ENCODE measurements at regions of chr6 and their contacts with region 1.

Region 1: GRCh38 chr6:152124429-152125074 is 317.1 kb downstream of the ESR1 start:
- DNase-seq: no peak
- H3K4me3 ChIP-seq: no peak overlapping the region
- H3K27ac ChIP-seq: peak overlapping the region in 1 of 8 donors; percentile 15
- H3K4me1 ChIP-seq: peaks cover 0 to 2% (median 0%) of the 10 kb centered on the region in 6 donors
- H3K27me3 ChIP-seq: no peaks in the 10 kb centered on the region
- CTCF ChIP-seq: peak; percentile 25 to 76 (median 68)
- POLR2A ChIP-seq: no peak

Region 2: DNA sequence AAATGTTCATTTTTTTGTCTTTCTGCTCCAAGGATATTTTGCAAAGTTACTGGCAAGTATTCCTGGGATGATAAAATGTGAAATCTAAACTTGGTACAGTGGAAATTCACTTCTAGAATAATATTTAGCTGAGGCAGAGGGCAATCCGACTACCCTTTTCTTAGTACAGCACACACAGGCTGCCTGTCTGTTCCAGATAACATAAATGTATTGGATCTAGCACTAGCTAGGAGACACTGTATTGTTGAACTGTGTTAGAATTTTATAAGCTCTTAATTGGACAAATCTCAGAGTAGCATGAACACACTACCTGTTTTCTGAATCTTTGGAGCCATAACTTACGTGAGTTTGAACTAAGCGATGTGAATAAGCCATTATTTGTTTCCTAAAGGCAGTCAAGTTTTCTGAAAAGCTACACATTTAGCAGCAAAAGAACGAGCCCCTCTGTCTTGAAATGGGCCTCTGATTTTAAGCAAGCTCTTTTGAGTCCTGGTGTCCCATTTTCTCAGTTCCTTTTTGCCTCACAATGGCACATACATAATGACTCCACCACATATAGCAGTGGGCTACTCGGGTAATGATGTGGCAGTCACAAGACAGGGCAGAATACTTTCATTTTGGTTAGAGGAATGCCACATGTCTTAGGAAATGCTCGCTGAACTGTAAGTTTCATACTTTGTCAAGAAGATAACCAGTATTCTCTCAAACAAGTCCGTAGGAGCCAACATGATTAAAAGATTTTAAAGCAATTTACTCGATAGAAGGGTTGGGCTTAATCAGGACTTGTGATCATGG is 433.6 kb before region 1 on chr6:
- intact Hi-C with region 1: loop called (anchors 10 kb)
- DNase-seq: no peak
- H3K4me3 ChIP-seq: peak overlapping the region in 6 of 8 donors; percentile 10 to 55 (median 17)
- H3K27ac ChIP-seq: peak overlapping the region; percentile 55 to 88 (median 79)
- H3K4me1 ChIP-seq: peaks cover 0 to 32% (median 9%) of the 10 kb centered on the region in 6 donors
- H3K27me3 ChIP-seq: no peaks in the 10 kb centered on the region
- CTCF ChIP-seq: no peak
- POLR2A ChIP-seq: no peak

Region 3: GRCh38 chr6:151765444-151765886 is 359.1 kb before region 1 on chr6:
- intact Hi-C with region 1: loop called (anchors 5 kb)
- DNase-seq: no peak
- H3K4me3 ChIP-seq: no peak overlapping the region
- H3K27ac ChIP-seq: no peak overlapping the region
- H3K4me1 ChIP-seq: peaks cover 0 to 18% (median 12%) of the 10 kb centered on the region in 6 donors
- H3K27me3 ChIP-seq: no peaks in the 10 kb centered on the region
- CTCF ChIP-seq: peak in 10 of 11 experiments; percentile 28 to 75 (median 66)
- POLR2A ChIP-seq: no peak

Region 4: GRCh38 chr6:152338335-152339125 is 214.0 kb after region 1 on chr6:
- intact Hi-C with region 1: no loop called
- DNase-seq: peak; percentile 80
- H3K4me3 ChIP-seq: no peak overlapping the region
- H3K27ac ChIP-seq: no peak overlapping the region
- H3K4me1 ChIP-seq: peaks cover 0 to 17% (median 0%) of the 10 kb centered on the region in 6 donors
- H3K27me3 ChIP-seq: no peaks in the 10 kb centered on the region
- CTCF ChIP-seq: peak; percentile 78 to 93 (median 89)
- POLR2A ChIP-seq: no peak

Measured in spleen (tissue), 13 donors.